H1 (cell line): ENCODE measurements at regions of chr11 and their contacts with region 1.

Region 1: DNA sequence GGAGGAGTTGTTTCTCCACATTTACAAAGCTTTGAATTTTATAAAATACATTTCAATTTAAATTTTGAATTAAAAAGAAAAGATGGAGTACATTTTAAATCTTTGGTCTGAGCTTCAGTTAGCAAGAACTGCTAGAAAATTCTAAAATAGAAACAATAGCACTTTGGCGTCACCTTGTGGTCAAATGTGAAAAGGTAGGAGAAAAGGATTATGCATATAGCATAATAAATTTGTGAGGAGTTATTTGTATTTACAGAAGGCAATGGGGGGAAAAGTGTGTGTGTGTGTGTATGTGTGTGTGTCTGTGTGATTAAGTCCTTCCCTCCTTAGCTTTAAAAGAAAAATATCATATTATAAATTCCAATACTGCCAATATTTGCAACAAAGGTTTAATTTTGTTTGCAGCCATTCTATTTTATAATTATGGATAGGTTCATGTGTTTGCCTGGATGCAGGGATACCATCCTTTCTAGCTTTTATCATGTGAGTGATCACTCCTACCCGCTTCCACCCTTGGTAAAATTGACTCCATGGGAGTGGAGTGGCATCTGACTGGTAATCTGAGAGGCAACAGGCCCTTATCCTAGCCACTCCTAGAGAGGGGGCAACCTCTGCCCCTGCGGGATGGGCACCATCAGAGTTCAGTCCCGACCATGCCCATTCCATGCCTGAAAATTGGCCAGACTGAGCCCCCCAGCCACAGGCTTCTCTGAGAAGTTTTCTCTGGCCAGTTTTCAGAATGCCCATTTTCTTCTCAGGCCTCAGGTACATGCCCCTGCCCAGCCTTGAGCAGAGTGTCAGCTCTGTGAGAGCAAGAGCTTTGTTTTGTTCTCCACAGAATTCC is 13.6 kb upstream of the LGR4 start:
- DNase-seq: no peak
- H3K4me3 ChIP-seq: no peak overlapping the region
- H3K27ac ChIP-seq: no peak overlapping the region
- H3K4me1 ChIP-seq: peaks cover 0 to 4% (median 2%) of the 10 kb centered on the region in 4 experiments; a peak in 3 of 7 replicates
- H3K27me3 ChIP-seq: no peaks in the 10 kb centered on the region
- CTCF ChIP-seq: peak in 2 of 3 experiments; percentile 63 to 78; a peak in 2 of 4 replicates
- EP300 ChIP-seq: no peak
- POLR2A ChIP-seq: no peak
- RAD21 ChIP-seq: peak; percentile 87 to 97

Region 2: DNA sequence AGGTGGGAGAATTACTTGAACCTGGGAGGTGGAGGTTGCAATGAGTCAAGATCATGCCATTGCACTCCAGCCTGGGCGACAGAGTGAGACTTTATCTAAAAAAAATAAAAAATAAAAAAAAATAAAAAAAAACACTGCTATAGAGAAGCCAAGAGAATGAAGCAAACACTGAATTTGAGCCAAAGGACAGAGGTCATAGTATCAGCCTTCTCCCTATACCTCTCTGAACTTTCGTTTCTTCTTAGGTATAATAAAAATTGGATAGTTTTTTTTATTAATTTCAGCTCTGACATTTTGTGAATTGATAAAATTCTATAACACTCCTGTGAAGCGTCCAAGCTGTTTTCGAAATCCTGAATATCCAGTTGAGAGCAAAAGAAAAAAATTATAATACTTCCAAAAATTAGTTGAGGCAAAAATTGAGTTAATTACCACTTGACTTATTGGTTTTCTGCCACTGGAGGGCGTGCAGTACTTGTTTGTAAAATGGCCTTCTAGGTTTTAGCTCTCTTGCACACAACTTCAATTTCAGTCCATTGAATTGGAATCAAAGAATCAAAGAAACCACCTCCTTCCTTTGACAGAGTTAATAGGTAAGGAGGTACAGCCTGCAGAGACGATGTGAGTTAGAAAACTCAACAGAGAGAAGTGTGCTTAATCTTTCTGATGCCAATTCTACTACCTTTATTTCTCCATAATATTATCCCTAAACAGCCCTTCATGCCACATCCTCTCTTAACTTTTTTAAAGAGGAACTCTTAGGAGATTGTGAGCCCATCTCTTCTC is 302.3 kb before region 1 on chr11:
- CTCF ChIA-PET with region 1: interaction called, 22 read pairs
- POLR2A ChIA-PET with region 1: no interaction called
- DNase-seq: no peak
- H3K4me3 ChIP-seq: no peak overlapping the region
- H3K27ac ChIP-seq: no peak overlapping the region
- H3K4me1 ChIP-seq: no peaks in the 10 kb centered on the region
- H3K27me3 ChIP-seq: no peaks in the 10 kb centered on the region
- CTCF ChIP-seq: peak in 2 of 3 experiments; percentile 59 to 61; a peak in 2 of 4 replicates
- EP300 ChIP-seq: no peak
- POLR2A ChIP-seq: no peak
- RAD21 ChIP-seq: peak; percentile 91 to 92

Region 3: DNA sequence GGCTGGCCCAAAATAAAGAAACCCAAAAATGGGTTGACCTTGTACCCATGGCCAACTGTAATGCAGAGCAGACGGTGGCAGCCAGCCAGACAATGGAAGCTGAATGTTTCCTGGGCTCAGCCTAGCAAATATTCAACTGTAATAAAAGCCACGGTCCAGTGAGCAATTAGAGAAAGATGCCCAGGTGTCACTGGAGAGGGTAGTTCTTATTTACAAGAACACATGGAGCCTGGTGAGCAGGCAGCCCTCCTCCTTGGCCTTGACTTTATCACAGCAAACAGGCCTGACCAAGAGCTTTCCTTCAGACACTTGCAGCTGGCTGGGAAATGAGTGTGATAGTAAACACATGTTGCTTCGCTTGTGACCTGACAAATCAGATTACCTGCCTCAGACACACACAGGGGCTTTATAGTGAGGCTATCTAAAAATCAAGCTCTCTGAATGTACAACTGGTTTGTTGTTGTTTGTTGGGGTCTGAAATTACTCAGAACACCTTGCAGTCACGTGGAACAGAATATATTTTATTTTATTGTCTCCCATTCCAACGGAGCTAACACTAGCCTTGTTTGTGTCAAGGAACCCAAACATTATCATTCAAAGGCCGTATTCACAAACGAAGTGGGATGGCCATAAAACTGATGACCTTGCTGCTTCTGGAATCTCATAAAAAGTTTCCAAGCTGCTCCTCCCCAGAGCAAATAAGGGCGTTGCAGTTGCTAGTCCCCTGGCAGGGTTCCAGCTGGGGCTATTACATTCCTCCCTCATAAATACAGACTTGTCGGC is 284.5 kb before region 1 on chr11:
- CTCF ChIA-PET with region 1: interaction called, 25 read pairs
- POLR2A ChIA-PET with region 1: no interaction called
- DNase-seq: no peak
- H3K4me3 ChIP-seq: no peak overlapping the region
- H3K27ac ChIP-seq: no peak overlapping the region
- H3K4me1 ChIP-seq: peaks cover 0 to 8% (median 5%) of the 10 kb centered on the region in 4 experiments; a peak in 3 of 7 replicates
- H3K27me3 ChIP-seq: no peaks in the 10 kb centered on the region
- CTCF ChIP-seq: no peak
- EP300 ChIP-seq: no peak
- POLR2A ChIP-seq: no peak
- RAD21 ChIP-seq: no peak

Region 4: DNA sequence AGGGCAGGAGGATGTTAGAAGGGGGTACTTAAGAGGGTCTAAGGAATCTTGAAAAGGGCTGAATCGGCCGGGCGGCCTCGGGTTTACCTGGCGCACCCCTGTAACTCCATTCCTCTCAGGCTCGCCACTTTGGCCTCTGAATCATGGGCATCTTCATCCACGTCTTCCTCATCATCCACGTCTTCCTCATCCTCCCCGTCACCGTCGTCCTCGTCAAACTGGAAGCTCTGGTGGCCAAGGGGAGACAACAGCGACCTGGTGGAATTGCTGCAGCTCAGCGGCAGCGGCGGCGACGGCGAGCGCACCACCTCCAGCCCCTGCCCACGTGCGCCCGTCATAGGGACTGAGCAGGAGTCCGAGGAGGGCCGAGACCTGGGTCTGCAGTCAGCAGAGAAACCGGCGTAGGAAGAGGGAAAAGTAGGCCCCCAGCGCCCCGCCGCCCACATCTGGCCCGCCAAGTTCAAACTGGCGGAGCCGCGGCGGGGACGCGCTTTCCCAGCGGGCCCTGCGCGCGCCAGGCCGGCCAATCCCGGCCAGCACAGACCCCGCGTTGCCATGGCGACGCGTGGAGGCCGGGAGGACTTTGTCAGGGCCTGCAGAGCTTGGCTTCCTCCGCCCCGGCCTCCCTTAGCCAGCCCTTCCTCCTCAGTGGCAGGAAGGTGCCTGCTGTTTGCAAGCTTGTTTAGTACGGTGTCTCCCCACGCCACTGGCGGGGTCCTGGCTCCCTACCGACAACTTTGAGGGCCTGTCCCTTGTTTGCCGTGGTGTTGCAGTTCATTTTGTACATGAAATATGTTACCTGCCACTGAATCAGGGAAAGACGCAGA is 123.2 kb before region 1 on chr11 and contains the start of gene CCDC34:
- CTCF ChIA-PET with region 1: interaction called, 14 read pairs
- POLR2A ChIA-PET with region 1: no interaction called
- DNase-seq: peak; percentile 87 to 91
- H3K4me3 ChIP-seq: peak within 1 kb of the TSS; percentile 69 to 89 (median 82)
- H3K27ac ChIP-seq: peak within 1 kb of the TSS; percentile 54
- H3K4me1 ChIP-seq: peaks cover 0 to 9% (median 2%) of the 10 kb centered on the region in 4 experiments; a peak in 3 of 7 replicates
- H3K27me3 ChIP-seq: no peaks in the 10 kb centered on the region
- CTCF ChIP-seq: no peak
- EP300 ChIP-seq: 0 out of 3 replicates have a peak, but pooled peaks of 1 of the 2 experiments have one; percentile 27
- POLR2A ChIP-seq: peak; percentile 48 to 58; a peak in 2 of 3 replicates
- RAD21 ChIP-seq: no peak
- total RNA-seq, gene CCDC34: 21.5 and 24.3 TPM in 2 replicates

Region 5: GRCh38 chr11:27388001-27388400 is 98.2 kb before region 1 on chr11:
- CTCF ChIA-PET with region 1: interaction called, 10 read pairs
- POLR2A ChIA-PET with region 1: no interaction called
- DNase-seq: no peak
- H3K4me3 ChIP-seq: no peak overlapping the region
- H3K27ac ChIP-seq: no peak overlapping the region
- H3K4me1 ChIP-seq: peaks cover 4 to 19% (median 9%) of the 10 kb centered on the region in 4 experiments; a peak in 5 of 7 replicates
- H3K27me3 ChIP-seq: no peaks in the 10 kb centered on the region
- CTCF ChIP-seq: no peak
- EP300 ChIP-seq: no peak
- POLR2A ChIP-seq: no peak
- RAD21 ChIP-seq: no peak

Region 6: GRCh38 chr11:27420722-27421572 is 65.2 kb before region 1 on chr11:
- CTCF ChIA-PET with region 1: interaction called, 10 read pairs
- POLR2A ChIA-PET with region 1: no interaction called
- DNase-seq: no peak
- H3K4me3 ChIP-seq: no peak overlapping the region
- H3K27ac ChIP-seq: no peak overlapping the region
- H3K4me1 ChIP-seq: peaks cover 0 to 25% (median 5%) of the 10 kb centered on the region in 4 experiments; a peak in 4 of 7 replicates
- H3K27me3 ChIP-seq: no peaks in the 10 kb centered on the region
- CTCF ChIP-seq: no peak
- EP300 ChIP-seq: no peak
- POLR2A ChIP-seq: no peak
- RAD21 ChIP-seq: no peak

Region 7: DNA sequence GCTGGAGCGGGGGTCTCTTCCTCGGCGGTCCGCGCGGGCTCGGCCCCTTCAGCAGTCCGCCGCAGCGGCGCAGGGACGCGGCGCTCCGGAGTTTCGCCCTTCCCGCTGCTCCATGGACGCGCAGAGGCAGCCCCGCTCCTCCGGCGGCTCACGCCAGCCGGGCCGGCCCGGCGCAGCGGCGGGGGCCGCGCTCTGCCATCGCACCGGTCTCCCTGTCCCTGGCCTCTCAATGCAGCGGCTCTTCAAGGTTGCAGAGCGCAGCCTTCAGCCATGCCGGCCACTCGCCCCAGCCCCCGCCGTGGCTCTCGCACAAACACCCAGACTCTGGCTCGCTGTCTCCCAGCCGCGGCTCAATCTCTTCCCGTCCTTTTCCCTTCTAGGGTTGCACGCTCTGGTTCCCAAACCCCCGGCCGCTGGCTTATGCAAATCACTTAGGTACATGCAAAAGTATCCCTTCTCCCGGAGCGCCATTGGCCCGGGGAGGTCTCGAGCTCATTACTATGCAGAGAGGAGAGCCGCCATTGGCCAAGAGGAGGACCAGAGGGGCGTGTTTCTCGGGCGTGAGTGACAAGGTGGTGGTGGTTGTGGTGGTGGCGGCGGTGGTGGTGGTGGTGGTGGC is 13.6 kb before region 1 on chr11 and contains the start of gene LGR4:
- CTCF ChIA-PET with region 1: interaction called, 36 read pairs
- POLR2A ChIA-PET with region 1: interaction called, 6 read pairs
- DNase-seq: peak; percentile 91 to 97
- H3K4me3 ChIP-seq: peak within 1 kb of the TSS; percentile 80 to 94 (median 86)
- H3K27ac ChIP-seq: peak within 1 kb of the TSS; percentile 84
- H3K4me1 ChIP-seq: peaks cover 0 to 14% (median 5%) of the 10 kb centered on the region in 4 experiments; a peak in 5 of 7 replicates
- H3K27me3 ChIP-seq: no peaks in the 10 kb centered on the region; a peak in 1 of 7 replicates
- CTCF ChIP-seq: no peak
- EP300 ChIP-seq: no peak
- POLR2A ChIP-seq: peak; percentile 73 to 80
- RAD21 ChIP-seq: no peak
- total RNA-seq, gene LGR4: 57.6 and 61.7 TPM in 2 replicates

Region 8: GRCh38 chr11:27514558-27514957 is 28.4 kb after region 1 on chr11:
- CTCF ChIA-PET with region 1: no interaction called
- POLR2A ChIA-PET with region 1: no interaction called
- DNase-seq: no peak
- H3K4me3 ChIP-seq: no peak overlapping the region
- H3K27ac ChIP-seq: no peak overlapping the region
- H3K4me1 ChIP-seq: no peaks in the 10 kb centered on the region
- H3K27me3 ChIP-seq: no peaks in the 10 kb centered on the region
- CTCF ChIP-seq: no peak
- EP300 ChIP-seq: no peak
- POLR2A ChIP-seq: no peak
- RAD21 ChIP-seq: no peak

Region 9: DNA sequence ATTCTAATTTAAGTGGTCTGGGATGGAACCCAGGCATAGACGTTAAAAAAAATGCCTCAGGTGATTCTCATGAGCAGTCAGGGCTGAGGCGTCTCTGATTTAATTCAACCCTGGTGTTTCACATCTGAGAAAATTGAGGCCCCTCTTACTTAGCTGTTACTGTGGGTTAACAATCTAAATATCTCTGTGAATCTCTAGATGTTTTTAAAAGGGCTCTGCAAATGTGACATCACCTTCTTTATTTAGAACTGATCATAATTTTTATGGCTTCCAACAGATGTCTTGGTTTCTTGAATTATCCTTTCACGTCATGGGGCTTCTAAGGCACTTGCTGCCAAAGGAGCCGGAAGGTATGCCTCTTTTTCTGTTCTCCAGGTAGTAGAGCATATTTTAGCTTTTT is 96.5 kb after region 1 on chr11:
- CTCF ChIA-PET with region 1: no interaction called
- POLR2A ChIA-PET with region 1: no interaction called
- DNase-seq: no peak
- H3K4me3 ChIP-seq: no peak overlapping the region
- H3K27ac ChIP-seq: no peak overlapping the region
- H3K4me1 ChIP-seq: no peaks in the 10 kb centered on the region
- H3K27me3 ChIP-seq: no peaks in the 10 kb centered on the region; a peak in 2 of 7 replicates
- CTCF ChIP-seq: no peak
- EP300 ChIP-seq: no peak
- POLR2A ChIP-seq: no peak
- RAD21 ChIP-seq: no peak

Region 10: GRCh38 chr11:27618281-27618915 is 132.2 kb after region 1 on chr11:
- CTCF ChIA-PET with region 1: no interaction called
- POLR2A ChIA-PET with region 1: no interaction called
- DNase-seq: no peak
- H3K4me3 ChIP-seq: no peak overlapping the region
- H3K27ac ChIP-seq: no peak overlapping the region
- H3K4me1 ChIP-seq: peaks cover 0 to 6% (median 0%) of the 10 kb centered on the region in 4 experiments; a peak in 2 of 7 replicates
- H3K27me3 ChIP-seq: no peaks in the 10 kb centered on the region
- CTCF ChIP-seq: no peak
- EP300 ChIP-seq: no peak
- POLR2A ChIP-seq: no peak
- RAD21 ChIP-seq: no peak